ENCODE measurements at regions of chr3 and their contacts with region 1.

Region 1: DNA sequence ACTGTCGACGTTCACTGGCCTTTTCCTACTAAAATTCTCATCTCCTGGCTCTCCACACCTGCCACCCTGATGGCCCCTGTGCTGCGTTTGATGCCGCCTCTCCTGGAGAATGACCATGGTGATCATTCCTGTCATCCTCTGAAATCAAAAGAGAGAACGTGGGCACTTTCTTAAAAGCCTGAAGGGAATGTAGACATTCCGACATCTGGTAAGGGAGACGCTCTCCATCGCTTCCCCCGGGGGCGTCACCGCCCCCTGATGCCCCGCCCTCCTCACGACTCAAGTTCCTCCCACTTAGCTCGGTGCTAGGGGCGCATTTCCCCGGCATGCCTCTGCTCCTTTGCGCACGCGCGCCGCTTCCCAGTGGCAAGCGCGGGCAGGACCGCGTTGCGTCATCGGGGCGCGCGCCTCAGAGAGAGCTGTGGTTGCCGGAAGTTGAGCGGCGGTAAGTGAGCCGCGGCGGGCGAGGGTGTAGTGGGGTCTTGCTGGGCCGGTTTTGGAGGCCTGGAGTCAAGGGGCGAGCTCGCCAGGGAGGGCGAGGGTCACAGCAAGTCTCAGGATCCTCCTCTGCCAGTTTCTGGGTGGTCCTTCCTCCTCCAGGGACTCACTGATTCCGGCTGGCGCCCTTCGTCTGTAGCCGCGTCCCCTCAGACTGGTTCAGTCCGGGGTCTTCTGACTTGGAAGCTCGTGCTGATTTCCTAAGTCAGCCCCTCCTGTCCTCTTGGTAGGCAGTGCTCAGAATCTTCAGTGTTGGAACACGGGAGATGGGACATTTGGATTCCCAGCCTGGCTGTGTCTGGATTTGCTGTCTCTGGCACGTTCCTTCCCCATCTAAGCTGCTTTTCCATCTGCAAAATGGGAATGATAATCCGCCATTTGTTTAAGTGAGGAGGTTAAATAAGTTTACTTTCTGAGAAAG is at the start of gene ATG7:
- DNase-seq: peak; percentile 92 to 99 (median 96)
- ATAC-seq: peak; percentile 96
- H3K4me3 ChIP-seq: peak within 1 kb of the TSS; percentile 90
- H3K4me3 Mint-ChIP-seq: peak within 1 kb of the TSS; percentile 98
- H3K27ac ChIP-seq: peak within 1 kb of the TSS; percentile 78 to 90
- H3K27ac Mint-ChIP-seq: peak within 1 kb of the TSS; percentile 98
- H3K4me1 ChIP-seq: peaks cover 24% of the 10 kb centered on the region
- H3K4me1 Mint-ChIP-seq: peaks cover 54% of the 10 kb centered on the region
- H3K27me3 ChIP-seq: no peaks in the 10 kb centered on the region
- H3K27me3 Mint-ChIP-seq: no peaks in the 10 kb centered on the region
- CTCF ChIP-seq: no peak
- total RNA-seq, gene ATG7: 21.4 to 25.7 TPM

Region 2: GRCh38 chr3:10804183-10804648 is 468.0 kb before region 1 on chr3:
- CTCF ChIA-PET with region 1: no interaction called
- POLR2A ChIA-PET with region 1: no interaction called
- intact Hi-C with region 1: no loop called
- DNase-seq: no peak
- ATAC-seq: no peak
- H3K4me3 ChIP-seq: no peak overlapping the region
- H3K4me3 Mint-ChIP-seq: no peak overlapping the region
- H3K27ac ChIP-seq: no peak overlapping the region
- H3K27ac Mint-ChIP-seq: no peak overlapping the region
- H3K4me1 ChIP-seq: no peaks in the 10 kb centered on the region
- H3K4me1 Mint-ChIP-seq: no peaks in the 10 kb centered on the region
- H3K27me3 ChIP-seq: peaks cover 2% of the 10 kb centered on the region in 2 experiments
- H3K27me3 Mint-ChIP-seq: peaks cover 48% of the 10 kb centered on the region
- CTCF ChIP-seq: no peak

Region 3: DNA sequence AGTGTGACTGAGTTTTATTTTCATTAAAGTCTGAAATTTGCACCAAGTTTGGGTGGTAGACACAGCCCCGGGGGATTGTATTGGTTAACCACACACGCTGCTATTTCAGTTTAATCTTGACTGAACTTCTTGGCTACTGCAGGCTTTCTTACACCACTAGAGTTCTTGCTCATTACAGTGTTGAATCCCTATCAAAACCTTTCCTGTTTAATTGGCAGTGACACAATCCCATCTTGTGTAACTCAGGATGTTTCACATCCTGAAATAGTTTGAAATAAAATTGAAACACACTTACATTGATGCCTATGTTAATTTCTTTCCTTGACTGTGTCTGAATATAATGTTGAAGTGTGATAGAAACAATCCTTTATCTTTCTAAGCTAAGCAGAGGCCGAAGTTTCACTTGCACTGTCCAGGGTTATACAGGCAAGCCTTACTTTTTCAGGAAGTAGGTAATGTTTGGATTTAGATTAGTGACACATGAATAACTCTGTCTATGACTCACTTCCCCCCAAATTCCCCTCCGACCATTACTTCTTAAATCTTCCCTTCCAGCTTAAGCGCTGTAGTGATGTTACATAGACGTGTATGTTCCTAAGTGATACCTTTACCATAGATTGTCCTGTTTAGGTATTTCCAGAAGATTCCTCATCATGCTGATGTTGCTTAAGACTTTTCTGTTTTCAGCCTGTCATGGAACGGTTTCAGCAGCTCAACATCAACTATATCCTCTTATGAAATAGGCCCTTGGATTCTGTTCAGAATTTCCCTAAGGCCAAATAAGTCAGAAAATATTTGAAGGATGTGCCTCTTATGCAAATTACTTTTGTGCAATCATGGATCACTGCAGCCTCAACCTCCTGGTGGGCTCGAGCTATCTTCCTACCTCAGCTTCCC is 16.8 kb after region 1 on chr3:
- CTCF ChIA-PET with region 1: interaction called, 4 read pairs
- POLR2A ChIA-PET with region 1: interaction called, 44 read pairs
- intact Hi-C with region 1: no loop called
- DNase-seq: peak in 3 of 14 experiments; percentile 45 to 75 (median 69)
- ATAC-seq: peak; percentile 12
- H3K4me3 ChIP-seq: no peak overlapping the region
- H3K4me3 Mint-ChIP-seq: peak overlapping the region; percentile 12
- H3K27ac ChIP-seq: peak overlapping the region in 1 of 2 donors; percentile 38
- H3K27ac Mint-ChIP-seq: peak overlapping the region; percentile 88
- H3K4me1 ChIP-seq: peaks cover 35% of the 10 kb centered on the region
- H3K4me1 Mint-ChIP-seq: peaks cover 64% of the 10 kb centered on the region
- H3K27me3 ChIP-seq: no peaks in the 10 kb centered on the region
- H3K27me3 Mint-ChIP-seq: no peaks in the 10 kb centered on the region
- CTCF ChIP-seq: no peak

Region 4: GRCh38 chr3:11846281-11847034 is 574.2 kb after region 1 on chr3 and contains the start of gene TAMM41:
- CTCF ChIA-PET with region 1: interaction called, 4 read pairs
- POLR2A ChIA-PET with region 1: interaction called, 22 read pairs
- intact Hi-C with region 1: loop called in 1 of 2 experiments (anchors 5 kb)
- DNase-seq: peak; percentile 78 to 94 (median 87)
- ATAC-seq: peak; percentile 99
- H3K4me3 ChIP-seq: peak within 1 kb of the TSS; percentile 95
- H3K4me3 Mint-ChIP-seq: peak within 1 kb of the TSS; percentile 95
- H3K27ac ChIP-seq: peak within 1 kb of the TSS; percentile 59 to 69
- H3K27ac Mint-ChIP-seq: peak within 1 kb of the TSS; percentile 93
- H3K4me1 ChIP-seq: peaks cover 34% of the 10 kb centered on the region
- H3K4me1 Mint-ChIP-seq: peaks cover 44% of the 10 kb centered on the region
- H3K27me3 ChIP-seq: no peaks in the 10 kb centered on the region
- H3K27me3 Mint-ChIP-seq: no peaks in the 10 kb centered on the region
- CTCF ChIP-seq: peak; percentile 76
- total RNA-seq, gene TAMM41: 19.7 to 22.0 TPM

Region 5: GRCh38 chr3:12489832-12490231 is 1217.6 kb after region 1 on chr3:
- CTCF ChIA-PET with region 1: no interaction called
- POLR2A ChIA-PET with region 1: no interaction called
- intact Hi-C with region 1: loop called in 1 of 2 experiments (anchors 5 kb)
- DNase-seq: no peak
- ATAC-seq: no peak
- H3K4me3 ChIP-seq: no peak overlapping the region
- H3K4me3 Mint-ChIP-seq: no peak overlapping the region
- H3K27ac ChIP-seq: no peak overlapping the region
- H3K27ac Mint-ChIP-seq: no peak overlapping the region
- H3K4me1 ChIP-seq: peaks cover 8% of the 10 kb centered on the region
- H3K4me1 Mint-ChIP-seq: peaks cover 29% of the 10 kb centered on the region
- H3K27me3 ChIP-seq: no peaks in the 10 kb centered on the region
- H3K27me3 Mint-ChIP-seq: no peaks in the 10 kb centered on the region
- CTCF ChIP-seq: no peak